CD8-positive, alpha-beta T cell (primary cell): ENCODE measurements at regions of chr4 and their contacts with region 1.

Region 1: DNA sequence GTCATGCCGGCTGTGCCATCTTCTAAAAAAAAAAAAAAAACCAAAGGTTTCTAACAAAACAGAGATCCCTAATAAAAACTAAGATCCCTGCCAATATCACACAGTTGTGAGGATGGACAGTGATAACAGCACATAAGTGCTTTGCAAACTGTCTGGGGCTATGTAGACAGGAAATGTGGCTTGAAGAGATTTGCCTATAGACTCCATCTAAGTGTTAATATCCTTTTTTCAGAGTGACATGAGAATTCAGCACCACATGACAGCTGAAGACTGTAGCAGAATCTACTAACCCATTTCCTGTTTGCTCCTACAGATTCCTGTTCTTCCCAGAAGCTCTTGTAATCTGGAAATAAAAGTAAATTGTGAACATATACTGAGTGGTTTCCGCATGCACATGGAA is 215.4 kb downstream of the KDR start:
- DNase-seq: no peak
- ATAC-seq: no peak
- H3K4me3 ChIP-seq: no peak overlapping the region
- H3K4me3 Mint-ChIP-seq: no peak overlapping the region
- H3K27ac ChIP-seq: no peak overlapping the region
- H3K27ac Mint-ChIP-seq: peak overlapping the region; percentile 42
- H3K4me1 ChIP-seq: no peaks in the 10 kb centered on the region
- H3K4me1 Mint-ChIP-seq: peaks cover 14% of the 10 kb centered on the region
- H3K27me3 ChIP-seq: no peaks in the 10 kb centered on the region
- H3K27me3 Mint-ChIP-seq: no peaks in the 10 kb centered on the region
- CTCF ChIP-seq: no peak

Region 2: GRCh38 chr4:54607067-54607466 is 302.9 kb before region 1 on chr4:
- CTCF ChIA-PET with region 1: no interaction called
- POLR2A ChIA-PET with region 1: no interaction called
- intact Hi-C with region 1: loop called in 1 of 2 experiments (anchors 5 kb)
- DNase-seq: no peak
- ATAC-seq: no peak
- H3K4me3 ChIP-seq: no peak overlapping the region
- H3K4me3 Mint-ChIP-seq: no peak overlapping the region
- H3K27ac ChIP-seq: no peak overlapping the region
- H3K27ac Mint-ChIP-seq: no peak overlapping the region
- H3K4me1 ChIP-seq: no peaks in the 10 kb centered on the region
- H3K4me1 Mint-ChIP-seq: no peaks in the 10 kb centered on the region
- H3K27me3 ChIP-seq: no peaks in the 10 kb centered on the region
- H3K27me3 Mint-ChIP-seq: peaks cover 4% of the 10 kb centered on the region
- CTCF ChIP-seq: no peak